ENCODE measurements at regions of chr9 and their contacts with region 1.

Region 1: GRCh38 chr9:124771021-124771866 is at the start of gene NR6A1:
- DNase-seq: peak; percentile 96 to 97
- ATAC-seq: peak; percentile 93 to 97 (median 96)
- H3K4me3 ChIP-seq: peak within 1 kb of the TSS; percentile 83 to 98 (median 92)
- H3K27ac ChIP-seq: peak within 1 kb of the TSS in 9 of 10 donors; percentile 61 to 90 (median 72)
- H3K4me1 ChIP-seq: peaks cover 0 to 57% (median 30%) of the 10 kb centered on the region in 9 donors
- H3K27me3 ChIP-seq: peaks cover 0 to 50% (median 26%) of the 10 kb centered on the region in 7 donors
- CTCF ChIP-seq: peak in 7 of 9 donors; percentile 25 to 59 (median 43)
- total RNA-seq, gene NR6A1: 0.78 to 2.0 (median 1.2) TPM

Region 2: DNA sequence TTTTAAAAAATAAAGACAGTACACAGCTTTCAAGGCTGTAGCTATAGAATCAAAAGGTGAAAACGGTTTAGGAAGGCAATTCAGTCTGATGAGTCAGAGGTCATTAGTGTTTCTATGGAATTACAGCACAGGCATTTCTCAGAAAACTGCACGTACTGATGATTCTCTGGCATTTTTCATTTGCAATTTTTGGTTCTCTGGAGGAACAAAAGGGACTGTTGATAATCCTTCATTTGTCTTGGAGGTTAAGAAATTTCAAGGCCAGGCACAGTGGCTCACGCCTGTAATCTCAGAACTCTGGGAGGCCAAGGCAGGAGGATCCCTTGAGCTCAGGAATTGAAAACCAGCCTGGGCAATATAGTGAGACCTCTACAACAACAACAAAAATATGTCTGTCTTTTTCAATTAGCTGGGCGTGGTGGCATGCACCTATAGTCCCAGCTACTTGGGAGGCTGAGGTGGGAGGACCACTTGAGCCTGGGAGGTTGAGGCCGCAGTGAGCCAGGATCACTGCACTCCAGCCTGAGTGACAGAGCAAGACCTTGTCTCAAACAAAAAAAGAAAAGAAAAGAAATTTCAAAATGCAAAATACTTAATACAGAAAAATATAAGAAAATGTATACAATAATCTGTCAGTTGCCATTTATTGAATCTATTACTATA is 27.4 kb before region 1 on chr9:
- intact Hi-C with region 1: no loop called
- DNase-seq: no peak
- ATAC-seq: no peak
- H3K4me3 ChIP-seq: no peak overlapping the region
- H3K27ac ChIP-seq: no peak overlapping the region
- H3K4me1 ChIP-seq: peaks cover 0 to 10% (median 0%) of the 10 kb centered on the region in 9 donors
- H3K27me3 ChIP-seq: no peaks in the 10 kb centered on the region
- CTCF ChIP-seq: no peak

Region 3: DNA sequence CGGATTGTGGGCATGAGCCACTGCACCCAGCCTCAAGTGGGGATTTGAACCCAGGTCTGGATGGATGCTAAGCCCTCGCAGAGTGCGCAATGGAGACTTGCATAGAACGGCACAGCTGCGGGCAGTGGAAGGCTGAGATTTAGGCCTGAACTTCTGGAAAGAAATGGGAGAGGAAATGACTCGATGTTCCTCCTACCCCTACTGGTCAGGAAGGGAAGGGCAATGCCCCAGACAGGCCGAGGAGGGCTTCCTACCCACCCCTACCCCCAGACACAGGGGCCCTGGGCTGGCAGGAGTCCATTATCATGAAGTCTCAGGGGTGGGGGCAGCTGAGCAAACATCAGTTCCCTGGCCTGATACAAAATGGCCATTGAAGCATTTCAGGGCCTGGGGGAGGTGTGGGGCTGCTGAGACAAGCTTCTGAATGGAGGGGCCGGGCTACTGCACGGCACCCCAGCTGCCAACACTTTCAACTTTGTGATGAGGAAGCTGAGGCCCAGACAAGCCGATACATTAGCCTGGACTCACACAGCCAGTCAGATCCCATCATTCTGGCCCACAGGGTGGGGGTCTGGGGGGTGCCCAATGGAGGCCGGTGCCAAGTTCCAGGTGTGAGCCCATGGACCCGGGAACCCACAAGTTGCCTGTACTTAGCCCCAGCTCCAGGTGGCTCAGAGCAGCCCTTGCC is 68.5 kb after region 1 on chr9:
- intact Hi-C with region 1: loop called in 2 of 10 experiments (anchors 5 kb)
- DNase-seq: no peak
- ATAC-seq: peak in 2 of 8 donors; percentile 2 to 28
- H3K4me3 ChIP-seq: no peak overlapping the region
- H3K27ac ChIP-seq: peak overlapping the region in 5 of 10 donors; percentile 12 to 61 (median 47)
- H3K4me1 ChIP-seq: peaks cover 9 to 39% (median 15%) of the 10 kb centered on the region in 9 donors
- H3K27me3 ChIP-seq: peaks cover 0 to 6% (median 0%) of the 10 kb centered on the region in 7 donors
- CTCF ChIP-seq: peak; percentile 12 to 59 (median 48)

Region 4: DNA sequence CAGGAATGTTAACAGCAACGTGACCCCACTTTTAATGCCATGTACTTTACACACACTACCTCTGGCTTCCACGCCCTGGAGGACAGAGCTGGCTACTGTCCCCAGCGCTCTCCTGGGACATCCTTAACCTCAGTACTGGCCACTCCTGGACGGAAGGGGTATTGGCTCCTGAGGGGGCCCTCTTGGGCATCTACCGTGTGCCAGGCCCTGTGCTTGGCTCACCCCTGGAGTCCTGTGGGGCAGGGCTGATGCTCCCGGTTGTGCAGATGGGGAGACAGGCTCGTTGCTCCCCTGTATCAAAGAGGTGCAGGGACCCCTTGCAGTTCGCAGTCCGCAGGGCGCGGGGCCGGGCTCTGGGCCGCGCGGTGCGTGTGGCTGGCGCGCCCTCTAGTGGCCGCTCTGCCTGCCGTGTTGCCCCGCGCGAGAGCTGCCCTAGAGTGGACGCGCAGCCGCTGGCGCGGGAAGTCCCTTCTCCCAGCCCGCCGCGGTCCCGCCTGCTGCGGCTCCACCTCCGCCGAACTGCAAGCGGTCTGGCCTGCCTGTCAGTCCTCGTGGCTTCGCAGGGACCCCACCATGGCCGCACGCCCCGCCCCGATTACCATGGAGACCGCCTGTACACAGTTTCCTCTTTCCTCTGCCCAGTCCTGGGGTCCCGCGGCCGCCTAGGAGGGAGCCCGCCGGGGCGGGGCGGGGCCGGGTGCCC is 81.7 kb after region 1 on chr9 and contains the start of gene WDR38:
- intact Hi-C with region 1: loop called (anchors 1 to 2 kb)
- DNase-seq: peak; percentile 81 to 83
- ATAC-seq: peak; percentile 89 to 93 (median 90)
- H3K4me3 ChIP-seq: peak within 1 kb of the TSS; percentile 9 to 56 (median 48)
- H3K27ac ChIP-seq: peak within 1 kb of the TSS; percentile 66 to 92 (median 79)
- H3K4me1 ChIP-seq: peaks cover 13 to 42% (median 25%) of the 10 kb centered on the region in 9 donors
- H3K27me3 ChIP-seq: no peaks in the 10 kb centered on the region
- CTCF ChIP-seq: peak; percentile 94 to 100 (median 99)
- total RNA-seq, gene WDR38: 0.22 TPM in 1 of 10 donors, not detected in the others

Region 5: GRCh38 chr9:124894741-124895170 is 123.5 kb after region 1 on chr9:
- intact Hi-C with region 1: loop called in 2 of 10 experiments (anchors 1 to 5 kb)
- DNase-seq: no peak
- ATAC-seq: peak in 2 of 8 donors; percentile 48 to 50
- H3K4me3 ChIP-seq: no peak overlapping the region
- H3K27ac ChIP-seq: no peak overlapping the region
- H3K4me1 ChIP-seq: no peaks in the 10 kb centered on the region
- H3K27me3 ChIP-seq: no peaks in the 10 kb centered on the region
- CTCF ChIP-seq: peak in 7 of 9 donors; percentile 34 to 52 (median 50)

Region 6: DNA sequence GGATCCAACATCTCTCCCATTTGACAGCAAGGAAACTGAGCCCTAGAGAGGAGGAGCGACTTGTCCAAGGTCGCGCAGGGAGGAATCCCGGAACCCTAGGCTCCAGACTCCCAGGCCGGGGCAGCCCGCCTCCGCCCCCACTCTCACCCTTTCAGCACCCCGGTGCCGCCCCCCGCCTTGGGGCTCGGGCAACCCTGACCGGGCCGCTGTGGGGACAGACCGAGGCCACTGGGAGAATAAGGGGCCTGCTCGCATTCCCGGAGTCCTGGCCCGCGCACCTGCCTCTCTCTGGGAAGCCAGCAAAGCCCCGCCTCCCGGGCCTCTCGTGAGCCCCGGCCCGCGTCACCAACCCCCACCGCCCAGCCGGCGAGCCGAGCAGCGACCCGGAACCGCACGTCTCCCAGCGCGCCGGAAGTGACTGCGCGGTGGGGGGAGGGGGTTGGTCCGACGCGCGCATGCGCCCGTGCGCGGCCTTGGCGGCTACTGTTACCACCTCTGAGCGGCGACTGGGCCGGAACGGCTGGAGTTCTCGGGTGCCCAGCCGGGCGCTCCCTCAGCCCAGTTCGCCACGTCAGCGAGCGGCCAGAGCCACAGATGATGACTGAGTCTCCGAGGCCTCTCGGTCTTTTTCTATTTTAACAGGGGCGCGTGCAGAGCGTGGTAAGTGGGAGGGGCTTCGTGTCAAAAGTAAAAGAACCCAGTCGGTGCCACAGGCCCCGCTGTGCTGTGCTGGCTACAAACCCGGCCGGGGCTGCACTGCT is 169.6 kb after region 1 on chr9 and contains the start of gene GOLGA1:
- intact Hi-C with region 1: loop called in 1 of 10 experiments (anchors 5 kb)
- DNase-seq: peak; percentile 95 to 96
- ATAC-seq: peak; percentile 98 to 99 (median 99)
- H3K4me3 ChIP-seq: peak within 1 kb of the TSS; percentile 68 to 94 (median 86)
- H3K27ac ChIP-seq: peak within 1 kb of the TSS; percentile 79 to 99 (median 96)
- H3K4me1 ChIP-seq: peaks cover 0 to 26% (median 14%) of the 10 kb centered on the region in 9 donors
- H3K27me3 ChIP-seq: no peaks in the 10 kb centered on the region
- CTCF ChIP-seq: peak in 1 of 9 donors; percentile 13
- total RNA-seq, gene GOLGA1: 15.6 to 26.0 (median 19.2) TPM

Region 7: GRCh38 chr9:125143375-125144090 is 372.3 kb after region 1 on chr9 and contains the start of gene SCAI:
- intact Hi-C with region 1: loop called in 5 of 10 experiments (anchors 5 kb)
- DNase-seq: peak; percentile 99
- ATAC-seq: peak; percentile 100
- H3K4me3 ChIP-seq: peak within 1 kb of the TSS; percentile 57 to 78 (median 70)
- H3K27ac ChIP-seq: peak within 1 kb of the TSS in 8 of 10 donors; percentile 58 to 79 (median 67)
- H3K4me1 ChIP-seq: peaks cover 2 to 17% (median 11%) of the 10 kb centered on the region in 9 donors
- H3K27me3 ChIP-seq: no peaks in the 10 kb centered on the region
- CTCF ChIP-seq: peak; percentile 96 to 100 (median 99)
- total RNA-seq, gene SCAI: 2.5 to 4.4 (median 3.6) TPM

Region 8: GRCh38 chr9:125374443-125375309 is 603.4 kb after region 1 on chr9:
- intact Hi-C with region 1: loop called in 8 of 10 experiments (anchors 2 to 10 kb)
- DNase-seq: peak; percentile 63
- ATAC-seq: peak; percentile 80 to 91 (median 86)
- H3K4me3 ChIP-seq: peak overlapping the region in 7 of 10 donors; percentile 27 to 52 (median 40)
- H3K27ac ChIP-seq: no peak overlapping the region
- H3K4me1 ChIP-seq: peaks cover 0 to 15% (median 4%) of the 10 kb centered on the region in 9 donors
- H3K27me3 ChIP-seq: peaks cover 0 to 6% (median 3%) of the 10 kb centered on the region in 7 donors
- CTCF ChIP-seq: peak; percentile 48 to 83 (median 78)

Measured in heart right ventricle (tissue), 16 donors.